ENCODE measurements at regions of chr3 and their contacts with region 1.

Region 1: GRCh38 chr3:183285828-183286457 is 32.9 kb downstream of the B3GNT5 start:
- DNase-seq: peak; percentile 86
- ATAC-seq: peak; percentile 91
- H3K4me3 ChIP-seq: peak overlapping the region in 1 of 5 experiments; percentile 11
- H3K4me3 Mint-ChIP-seq: peak overlapping the region; percentile 74
- H3K27ac ChIP-seq: no peak overlapping the region
- H3K27ac Mint-ChIP-seq: peak overlapping the region; percentile 93
- H3K4me1 ChIP-seq: peaks cover 11 to 13% of the 10 kb centered on the region in 2 donors
- H3K4me1 Mint-ChIP-seq: peaks cover 24% of the 10 kb centered on the region
- H3K27me3 ChIP-seq: peaks cover 0 to 5% (median 0%) of the 10 kb centered on the region in 4 experiments
- H3K27me3 Mint-ChIP-seq: peaks cover 4% of the 10 kb centered on the region
- CTCF ChIP-seq: no peak

Region 2: GRCh38 chr3:183260167-183260904 is 25.6 kb before region 1 on chr3:
- CTCF ChIA-PET with region 1: interaction called, 6 read pairs
- POLR2A ChIA-PET with region 1: interaction called, 5 read pairs
- intact Hi-C with region 1: loop called (anchors 2 kb)
- DNase-seq: peak; percentile 54
- ATAC-seq: peak; percentile 85
- H3K4me3 ChIP-seq: peak overlapping the region in 1 of 5 experiments; percentile 7
- H3K4me3 Mint-ChIP-seq: peak overlapping the region; percentile 52
- H3K27ac ChIP-seq: no peak overlapping the region
- H3K27ac Mint-ChIP-seq: peak overlapping the region; percentile 59
- H3K4me1 ChIP-seq: peaks cover 15 to 18% of the 10 kb centered on the region in 2 donors
- H3K4me1 Mint-ChIP-seq: peaks cover 19% of the 10 kb centered on the region
- H3K27me3 ChIP-seq: peaks cover 0 to 16% (median 8%) of the 10 kb centered on the region in 4 experiments
- H3K27me3 Mint-ChIP-seq: peaks cover 24% of the 10 kb centered on the region
- CTCF ChIP-seq: no peak

Region 3: DNA sequence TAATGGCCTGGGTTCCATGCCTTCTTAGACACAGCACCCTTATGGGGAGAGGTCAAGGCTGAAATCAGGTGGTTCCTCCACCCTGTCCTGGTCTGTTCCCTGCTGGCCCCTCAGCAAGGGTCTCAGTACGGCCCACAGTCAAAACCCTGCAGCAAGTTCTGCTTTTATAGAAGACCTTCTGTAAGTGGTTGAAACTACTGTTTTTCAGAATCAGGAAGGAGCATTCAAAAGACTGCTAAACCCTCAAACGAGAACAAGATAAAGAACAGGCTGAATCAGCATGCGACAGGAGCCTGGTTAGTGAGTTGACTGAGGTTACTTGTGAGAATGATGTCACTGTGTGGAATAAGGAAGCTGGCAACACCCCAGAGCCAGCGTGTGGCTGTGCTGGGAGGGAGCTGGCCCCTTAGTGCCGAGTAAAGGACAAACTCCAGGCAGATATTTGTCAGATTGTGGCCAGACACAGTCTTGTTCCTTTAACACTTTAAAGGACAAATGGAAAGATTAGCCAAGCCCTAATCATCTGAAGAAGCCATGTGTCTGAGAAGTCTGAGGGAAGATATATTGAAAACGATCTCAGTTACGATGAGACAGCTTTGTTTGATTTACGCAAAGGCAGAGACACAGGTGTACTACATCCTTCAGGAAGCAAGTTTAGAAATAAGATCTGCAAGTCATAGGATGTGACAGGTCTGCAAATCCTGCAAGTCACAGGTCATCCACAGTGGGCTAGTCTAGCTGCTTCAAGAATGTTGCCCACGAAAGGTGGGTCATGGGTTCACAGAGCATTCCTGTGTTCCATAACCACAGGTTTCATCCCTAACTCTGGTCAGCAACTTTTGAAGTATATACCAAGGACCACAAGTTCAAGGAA is 21.1 kb after region 1 on chr3:
- CTCF ChIA-PET with region 1: no interaction called
- POLR2A ChIA-PET with region 1: no interaction called
- intact Hi-C with region 1: loop called (anchors 2 kb)
- DNase-seq: peak; percentile 62
- ATAC-seq: peak; percentile 87
- H3K4me3 ChIP-seq: no peak overlapping the region
- H3K4me3 Mint-ChIP-seq: peak overlapping the region; percentile 27
- H3K27ac ChIP-seq: no peak overlapping the region
- H3K27ac Mint-ChIP-seq: no peak overlapping the region
- H3K4me1 ChIP-seq: peaks cover 11 to 14% of the 10 kb centered on the region in 2 donors
- H3K4me1 Mint-ChIP-seq: peaks cover 15% of the 10 kb centered on the region
- H3K27me3 ChIP-seq: peaks cover 0 to 3% (median 1%) of the 10 kb centered on the region in 4 experiments
- H3K27me3 Mint-ChIP-seq: peaks cover 10% of the 10 kb centered on the region
- CTCF ChIP-seq: no peak